ENCODE measurements at regions of chr2 and their contacts with region 1.

Region 1: DNA sequence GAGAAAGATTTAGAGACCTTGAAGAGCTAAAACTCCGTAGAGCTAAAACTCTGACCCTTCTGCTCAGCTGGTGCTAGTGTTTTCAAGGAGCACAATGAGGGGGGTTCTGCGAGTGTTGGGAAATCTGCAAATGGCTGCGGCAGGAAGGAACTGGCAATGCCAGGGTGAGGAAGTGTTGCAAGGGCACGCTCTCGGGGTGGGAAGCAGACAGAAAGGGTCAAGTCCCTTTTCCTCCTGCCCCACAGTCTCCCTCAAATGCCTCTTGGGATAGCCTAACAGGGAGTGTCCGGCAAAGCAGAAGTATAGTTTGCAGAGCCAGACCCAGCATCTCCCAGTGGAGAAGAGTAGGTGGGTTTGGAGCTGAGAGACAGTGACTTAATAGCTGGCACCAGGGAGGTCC is 60.5 kb downstream of the NCAPH start:
- H3K4me3 Mint-ChIP-seq: peak overlapping the region; percentile 52
- H3K27ac Mint-ChIP-seq: peak overlapping the region; percentile 97
- H3K4me1 Mint-ChIP-seq: peaks cover 56% of the 10 kb centered on the region
- H3K27me3 Mint-ChIP-seq: no peaks in the 10 kb centered on the region

Region 2: GRCh38 chr2:96225016-96225533 is 171.0 kb before region 1 on chr2:
- intact Hi-C with region 1: no loop called
- H3K4me3 Mint-ChIP-seq: no peak overlapping the region
- H3K27ac Mint-ChIP-seq: peak overlapping the region; percentile 83
- H3K4me1 Mint-ChIP-seq: peaks cover 45% of the 10 kb centered on the region
- H3K27me3 Mint-ChIP-seq: no peaks in the 10 kb centered on the region

Region 3: GRCh38 chr2:96329416-96330269 is 66.5 kb before region 1 on chr2:
- intact Hi-C with region 1: loop called (anchors 10 kb)
- H3K4me3 Mint-ChIP-seq: no peak overlapping the region
- H3K27ac Mint-ChIP-seq: no peak overlapping the region
- H3K4me1 Mint-ChIP-seq: peaks cover 83% of the 10 kb centered on the region
- H3K27me3 Mint-ChIP-seq: no peaks in the 10 kb centered on the region